CD8-positive, alpha-beta T cell (primary cell): ENCODE measurements at regions of chr16 and their contacts with region 1.

Region 1: DNA sequence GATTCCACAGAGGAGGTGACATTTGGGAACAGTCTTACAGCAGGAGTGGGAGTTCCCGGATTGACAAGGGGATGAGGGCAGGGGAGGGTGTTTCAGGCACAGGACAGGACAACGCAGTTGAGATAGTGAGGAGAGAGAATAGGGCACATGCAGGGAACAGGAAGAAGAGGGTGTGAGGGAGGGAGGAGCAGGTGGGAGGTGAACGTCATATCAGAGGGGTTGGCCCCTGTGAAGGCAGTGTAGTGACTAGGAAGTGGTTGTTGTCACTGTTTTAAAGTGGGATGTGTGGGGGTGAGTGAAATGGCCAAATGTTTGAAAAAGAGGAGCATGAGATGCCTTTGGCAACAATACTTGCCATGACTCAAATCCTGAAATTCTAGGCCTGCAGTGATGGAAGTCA is 12.2 kb downstream of the PRKCB start:
- DNase-seq: peak in 8 of 9 experiments; percentile 13 to 89 (median 62)
- ATAC-seq: peak; percentile 100
- H3K4me3 ChIP-seq: no peak overlapping the region
- H3K4me3 Mint-ChIP-seq: peak overlapping the region; percentile 53
- H3K27ac ChIP-seq: peak overlapping the region; percentile 22 to 64
- H3K27ac Mint-ChIP-seq: peak overlapping the region; percentile 88
- H3K4me1 ChIP-seq: peaks cover 58% of the 10 kb centered on the region
- H3K4me1 Mint-ChIP-seq: peaks cover 78% of the 10 kb centered on the region
- H3K27me3 ChIP-seq: no peaks in the 10 kb centered on the region
- H3K27me3 Mint-ChIP-seq: no peaks in the 10 kb centered on the region
- CTCF ChIP-seq: no peak

Region 2: GRCh38 chr16:23835390-23836077 is 12.4 kb before region 1 on chr16 and contains the start of gene PRKCB:
- CTCF ChIA-PET with region 1: interaction called, 6 read pairs
- POLR2A ChIA-PET with region 1: interaction called, 3 read pairs
- intact Hi-C with region 1: loop called in 1 of 2 experiments (anchors 1 kb)
- DNase-seq: peak; percentile 80 to 94 (median 88)
- ATAC-seq: peak; percentile 88
- H3K4me3 ChIP-seq: peak within 1 kb of the TSS; percentile 71 to 93
- H3K4me3 Mint-ChIP-seq: peak within 1 kb of the TSS; percentile 99
- H3K27ac ChIP-seq: peak within 1 kb of the TSS; percentile 40 to 44
- H3K27ac Mint-ChIP-seq: peak within 1 kb of the TSS; percentile 95
- H3K4me1 ChIP-seq: peaks cover 48% of the 10 kb centered on the region
- H3K4me1 Mint-ChIP-seq: peaks cover 55% of the 10 kb centered on the region
- H3K27me3 ChIP-seq: no peaks in the 10 kb centered on the region
- H3K27me3 Mint-ChIP-seq: no peaks in the 10 kb centered on the region
- CTCF ChIP-seq: no peak
- total RNA-seq, gene PRKCB: 62.8 to 64.4 TPM